Common myeloid progenitor, CD34-positive (primary cell): ENCODE measurements at regions of chr9 and their contacts with region 1.

Region 1: DNA sequence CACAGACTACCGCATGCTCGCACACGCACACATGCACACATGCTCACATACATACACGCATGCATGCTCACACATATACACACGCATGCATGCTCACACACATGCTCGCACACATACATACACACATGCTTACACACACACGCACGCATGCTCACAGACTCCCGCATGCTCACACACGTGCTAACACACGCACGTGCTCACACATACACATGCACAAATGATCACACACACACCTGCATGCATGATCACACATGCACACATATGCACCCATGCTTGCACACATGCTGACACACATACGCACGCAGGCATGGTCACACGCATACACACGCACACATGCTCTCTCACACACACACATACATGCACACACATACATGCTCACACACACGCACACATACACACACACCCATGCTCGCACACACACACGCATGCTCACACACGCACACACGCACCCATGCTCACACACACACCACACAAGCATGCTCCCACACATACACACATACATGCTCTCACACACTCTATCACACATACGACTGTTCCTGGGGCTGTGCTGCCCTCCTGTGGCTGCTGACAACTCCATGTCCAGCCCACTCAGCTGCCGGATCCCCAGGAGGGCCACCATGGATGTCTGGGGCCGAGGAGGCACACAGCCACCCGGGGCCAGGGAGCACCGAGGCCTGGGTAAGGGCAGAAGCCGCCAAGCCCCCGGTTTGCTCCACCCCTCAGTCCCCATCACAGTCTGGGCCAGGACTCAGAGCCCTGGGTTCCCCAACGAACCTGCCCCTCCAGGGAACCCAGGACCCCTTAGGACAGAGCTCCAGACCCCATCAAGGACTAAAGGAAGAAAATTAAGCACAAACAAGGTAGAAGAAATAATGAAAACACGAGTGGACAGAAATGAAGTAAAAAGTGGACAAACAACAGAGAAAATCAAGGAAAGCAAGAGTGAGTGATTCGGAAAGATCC is 31.4 kb upstream of the EGFL7 start:
- DNase-seq: peak; percentile 90 to 95 (median 94)
- H3K4me3 ChIP-seq: no peak overlapping the region
- H3K27ac ChIP-seq: no peak overlapping the region
- H3K4me1 ChIP-seq: peaks cover 0 to 53% (median 52%) of the 10 kb centered on the region in 4 experiments
- H3K27me3 ChIP-seq: no peaks in the 10 kb centered on the region

Region 2: GRCh38 chr9:136462664-136463063 is 168.7 kb before region 1 on chr9:
- CTCF ChIA-PET with region 1: no interaction called
- POLR2A ChIA-PET with region 1: no interaction called
- DNase-seq: no peak
- H3K4me3 ChIP-seq: no peak overlapping the region
- H3K27ac ChIP-seq: no peak overlapping the region
- H3K4me1 ChIP-seq: no peaks in the 10 kb centered on the region
- H3K27me3 ChIP-seq: no peaks in the 10 kb centered on the region

Region 3: DNA sequence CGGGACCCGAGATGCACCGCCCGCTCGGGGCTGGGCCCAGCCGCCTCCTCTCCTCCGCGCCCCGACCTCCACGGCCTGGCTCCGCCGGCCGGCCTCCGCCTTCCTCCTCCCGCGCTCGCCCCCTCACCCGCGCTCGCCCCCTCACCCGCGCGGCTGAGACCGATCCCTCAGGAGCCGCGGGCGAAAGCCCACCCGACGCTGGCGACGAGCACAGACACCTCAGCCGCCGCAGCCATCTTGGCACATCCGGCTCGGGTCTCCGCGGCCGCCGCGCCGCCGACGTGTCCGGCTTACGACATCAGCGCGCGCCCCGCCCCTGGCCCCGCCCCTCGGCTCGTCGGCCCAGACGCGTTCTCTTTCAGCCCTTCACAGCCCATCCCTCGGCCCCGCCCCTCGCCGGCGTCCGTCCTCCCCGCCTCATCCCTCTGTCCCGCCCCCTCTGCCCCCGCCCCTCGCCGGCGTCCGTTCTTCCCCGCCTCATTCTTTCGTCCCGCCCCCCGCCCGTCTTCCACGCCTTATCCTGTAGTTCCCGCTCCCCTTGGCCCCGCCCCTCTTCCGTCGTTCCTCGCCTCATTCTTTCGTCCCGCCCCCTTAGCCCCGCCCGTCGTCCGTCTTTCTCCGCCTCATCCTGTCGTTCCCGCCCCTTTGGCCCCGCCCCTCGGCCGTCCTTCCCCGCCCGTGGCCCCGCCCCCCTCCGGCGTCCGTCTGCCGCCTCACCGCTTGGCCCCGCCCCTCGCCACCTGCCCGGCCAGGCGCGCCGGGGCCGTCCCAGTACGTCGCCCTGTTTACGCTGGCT is 148.3 kb before region 1 on chr9 and contains the start of gene SEC16A:
- CTCF ChIA-PET with region 1: interaction called, 238 read pairs
- POLR2A ChIA-PET with region 1: interaction called, 9 read pairs
- DNase-seq: peak; percentile 95 to 98 (median 98)
- H3K4me3 ChIP-seq: peak within 1 kb of the TSS; percentile 81 to 95 (median 92)
- H3K27ac ChIP-seq: peak within 1 kb of the TSS; percentile 90 to 96
- H3K4me1 ChIP-seq: peaks cover 7 to 47% (median 31%) of the 10 kb centered on the region in 4 experiments
- H3K27me3 ChIP-seq: no peaks in the 10 kb centered on the region

Region 4: GRCh38 chr9:136521537-136521936 is 109.8 kb before region 1 on chr9:
- CTCF ChIA-PET with region 1: interaction called, 15 read pairs
- POLR2A ChIA-PET with region 1: no interaction called
- DNase-seq: peak in 2 of 3 donors; percentile 34 to 49
- H3K4me3 ChIP-seq: no peak overlapping the region
- H3K27ac ChIP-seq: no peak overlapping the region
- H3K4me1 ChIP-seq: peaks cover 0 to 27% (median 3%) of the 10 kb centered on the region in 4 experiments
- H3K27me3 ChIP-seq: no peaks in the 10 kb centered on the region

Region 5: DNA sequence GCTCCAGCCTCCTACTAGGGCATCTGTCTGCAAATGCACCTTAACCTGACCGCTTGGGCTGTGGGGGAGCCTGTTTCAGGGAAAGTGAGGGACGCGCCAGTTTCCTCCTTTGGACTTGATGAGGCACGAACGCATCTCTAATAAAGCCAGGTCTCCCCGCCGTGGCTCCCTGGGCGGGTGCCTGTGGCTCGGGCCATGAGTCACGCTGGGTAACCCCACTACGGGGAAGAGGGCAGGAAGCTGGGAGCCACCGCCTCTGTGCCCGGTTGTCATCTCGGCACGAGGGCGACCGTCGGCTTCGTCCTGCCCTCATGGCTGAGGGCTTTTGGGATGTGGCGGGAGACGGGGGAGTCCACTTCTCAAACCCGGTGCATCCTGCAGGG is 97.6 kb before region 1 on chr9:
- CTCF ChIA-PET with region 1: interaction called, 90 read pairs
- POLR2A ChIA-PET with region 1: interaction called, 12 read pairs
- DNase-seq: peak; percentile 78 to 84 (median 82)
- H3K4me3 ChIP-seq: peak overlapping the region in 5 of 7 experiments; percentile 1 to 61 (median 13)
- H3K27ac ChIP-seq: peak overlapping the region; percentile 58 to 83
- H3K4me1 ChIP-seq: peaks cover 2 to 97% (median 94%) of the 10 kb centered on the region in 4 experiments
- H3K27me3 ChIP-seq: no peaks in the 10 kb centered on the region

Region 6: GRCh38 chr9:136545966-136546698 is 85.2 kb before region 1 on chr9 and contains the start of gene NOTCH1:
- CTCF ChIA-PET with region 1: interaction called, 90 read pairs
- POLR2A ChIA-PET with region 1: interaction called, 10 read pairs
- DNase-seq: peak; percentile 97 to 98 (median 97)
- H3K4me3 ChIP-seq: peak within 1 kb of the TSS; percentile 80 to 96 (median 86)
- H3K27ac ChIP-seq: peak within 1 kb of the TSS; percentile 50 to 76
- H3K4me1 ChIP-seq: peaks cover 0 to 85% (median 80%) of the 10 kb centered on the region in 4 experiments
- H3K27me3 ChIP-seq: no peaks in the 10 kb centered on the region

Region 7: GRCh38 chr9:136619742-136620440 is 11.4 kb before region 1 on chr9:
- CTCF ChIA-PET with region 1: interaction called, 20 read pairs
- POLR2A ChIA-PET with region 1: interaction called, 3 read pairs
- DNase-seq: peak in 2 of 3 donors; percentile 72 to 79
- H3K4me3 ChIP-seq: peak overlapping the region in 3 of 7 experiments; percentile 4 to 45 (median 26)
- H3K27ac ChIP-seq: no peak overlapping the region
- H3K4me1 ChIP-seq: peaks cover 0 to 100% (median 79%) of the 10 kb centered on the region in 4 experiments
- H3K27me3 ChIP-seq: no peaks in the 10 kb centered on the region

Region 8: GRCh38 chr9:136700959-136701667 is 69.8 kb after region 1 on chr9:
- CTCF ChIA-PET with region 1: no interaction called
- POLR2A ChIA-PET with region 1: no interaction called
- DNase-seq: peak; percentile 78 to 96 (median 95)
- H3K4me3 ChIP-seq: peak overlapping the region in 5 of 7 experiments; percentile 22 to 63 (median 46)
- H3K27ac ChIP-seq: peak overlapping the region; percentile 64 to 84
- H3K4me1 ChIP-seq: peaks cover 2 to 83% (median 75%) of the 10 kb centered on the region in 4 experiments
- H3K27me3 ChIP-seq: no peaks in the 10 kb centered on the region

Region 9: DNA sequence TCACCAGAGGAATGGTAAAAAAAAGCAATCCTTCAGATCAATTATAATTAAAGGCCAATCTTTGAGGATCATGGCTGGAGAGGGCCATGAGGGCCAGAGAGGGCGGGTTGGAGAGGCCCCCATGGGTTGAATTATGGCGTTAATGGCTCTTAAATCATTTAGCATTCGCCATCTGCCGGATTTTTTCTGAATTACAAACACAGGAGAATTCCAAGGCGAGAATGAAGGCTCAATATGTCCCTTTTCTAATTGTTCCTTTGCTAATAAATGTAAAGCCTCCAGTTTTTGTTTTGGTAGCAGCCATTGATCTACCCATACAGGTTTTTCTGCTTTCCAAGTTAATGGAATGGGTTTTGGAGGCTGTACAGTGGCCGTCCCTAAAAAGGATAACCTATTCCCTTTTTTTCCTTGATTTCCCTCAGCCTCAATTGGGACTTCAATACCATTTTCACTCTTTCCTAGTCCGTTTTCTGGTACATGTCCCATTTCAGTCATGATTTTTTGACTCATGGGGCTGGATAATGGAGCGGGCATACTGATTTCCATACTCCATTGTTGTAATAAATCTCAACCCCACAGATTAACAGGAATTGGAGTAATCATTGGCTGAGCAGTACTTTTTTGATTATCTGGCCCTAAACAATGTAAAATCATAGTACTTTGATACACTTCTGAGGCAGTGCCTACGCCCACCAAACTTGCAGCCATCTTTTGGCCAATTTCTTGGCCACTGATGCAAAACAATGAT is 153.1 kb after region 1 on chr9:
- CTCF ChIA-PET with region 1: no interaction called
- POLR2A ChIA-PET with region 1: no interaction called
- DNase-seq: peak in 2 of 3 donors; percentile 48 to 57
- H3K4me3 ChIP-seq: no peak overlapping the region
- H3K27ac ChIP-seq: no peak overlapping the region
- H3K4me1 ChIP-seq: peaks cover 0 to 18% (median 7%) of the 10 kb centered on the region in 4 experiments
- H3K27me3 ChIP-seq: no peaks in the 10 kb centered on the region